Mucosa of descending colon (tissue), 3 donors: ENCODE measurements at regions of chr1 and their contacts with region 1.

Region 1: GRCh38 chr1:167599957-167600581 is 30.0 kb upstream of the RCSD1 start:
- DNase-seq: peak in 1 of 3 donors; percentile 58
- ATAC-seq: peak; percentile 72
- H3K4me3 ChIP-seq: no peak overlapping the region
- H3K4me1 ChIP-seq: peaks cover 17% of the 10 kb centered on the region
- CTCF ChIP-seq: no peak

Region 2: GRCh38 chr1:167499664-167500101 is 100.4 kb before region 1 on chr1:
- intact Hi-C with region 1: no loop called
- DNase-seq: no peak
- ATAC-seq: peak; percentile 61
- H3K4me3 ChIP-seq: no peak overlapping the region
- H3K4me1 ChIP-seq: no peaks in the 10 kb centered on the region
- CTCF ChIP-seq: no peak

Region 3: DNA sequence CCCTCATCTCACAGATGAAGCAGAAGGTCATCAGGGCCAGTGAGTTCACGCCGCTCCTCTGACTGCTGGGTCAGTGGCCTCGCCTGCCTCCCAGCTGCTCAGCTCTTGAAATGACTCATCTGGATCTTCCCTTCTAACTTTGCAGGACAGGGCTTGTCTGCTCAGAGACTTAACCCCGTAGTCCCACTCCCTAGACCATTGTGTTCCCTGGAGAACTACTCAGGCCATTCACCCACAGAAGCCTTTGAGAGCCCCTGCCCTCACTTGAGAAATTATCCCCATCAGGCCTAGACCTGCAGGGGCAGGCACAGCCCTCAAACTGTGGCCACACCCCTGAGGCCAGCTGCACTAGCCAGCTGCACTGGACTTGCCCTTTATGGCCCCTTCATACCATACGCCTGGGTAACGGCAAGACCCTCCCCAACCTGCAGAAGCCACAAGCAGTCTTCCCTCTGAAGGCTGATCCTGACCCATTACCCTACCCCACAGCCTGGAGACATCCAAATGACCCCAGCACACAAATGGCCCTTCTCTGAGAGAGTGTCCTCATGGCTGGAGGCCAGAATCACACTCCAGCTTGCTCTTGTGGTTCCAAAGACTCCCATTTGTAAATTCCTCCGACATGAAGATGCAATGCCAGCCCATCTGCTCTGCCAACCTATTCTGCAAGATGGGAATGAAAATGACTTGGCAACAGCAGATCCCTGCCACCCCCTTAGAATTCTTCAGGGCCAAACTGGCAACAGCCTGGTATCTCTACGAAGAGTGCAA is 63.1 kb after region 1 on chr1:
- intact Hi-C with region 1: no loop called
- DNase-seq: no peak
- ATAC-seq: peak; percentile 59
- H3K4me3 ChIP-seq: no peak overlapping the region
- H3K4me1 ChIP-seq: peaks cover 19% of the 10 kb centered on the region
- CTCF ChIP-seq: no peak

Region 4: DNA sequence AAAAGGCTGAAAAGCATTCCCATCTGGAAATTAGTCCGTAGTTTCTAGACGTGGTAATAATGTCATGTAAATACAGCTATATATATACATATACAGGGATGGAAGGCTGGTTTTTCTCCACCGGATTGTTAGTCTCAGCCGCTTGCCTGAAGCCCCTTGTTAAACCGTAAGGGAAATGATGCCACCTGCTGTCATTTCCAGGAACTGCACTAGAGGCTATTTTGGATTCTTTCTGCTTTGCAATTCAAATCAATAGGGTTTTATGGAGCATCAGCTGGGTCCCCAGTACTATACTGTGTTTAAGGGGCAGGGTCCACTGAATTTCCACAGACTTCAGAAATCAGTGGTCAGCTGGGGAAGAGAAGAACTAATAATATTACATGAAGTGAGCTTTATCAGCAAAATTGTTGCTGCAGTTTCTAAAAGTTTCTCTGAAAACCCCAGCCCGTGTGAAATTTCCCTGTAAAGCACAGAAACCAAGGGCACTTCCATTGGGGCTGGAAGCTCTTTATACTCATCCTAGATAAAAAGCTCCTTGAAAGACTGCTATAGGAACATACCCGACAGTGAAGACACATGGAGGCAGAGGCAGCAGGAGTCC is 88.0 kb after region 1 on chr1:
- intact Hi-C with region 1: loop called (anchors 2 to 5 kb)
- DNase-seq: peak in 1 of 3 donors; percentile 95
- ATAC-seq: peak; percentile 78
- H3K4me3 ChIP-seq: no peak overlapping the region
- H3K4me1 ChIP-seq: peaks cover 3% of the 10 kb centered on the region
- CTCF ChIP-seq: peak; percentile 77